MCF 10A (cell line): ENCODE measurements at regions of chr13 and their contacts with region 1.

Region 1: GRCh38 chr13:71721104-71721503 is 145.9 kb downstream of the DACH1 start:
- DNase-seq: no peak
- H3K4me3 Mint-ChIP-seq: no peak overlapping the region
- H3K27ac Mint-ChIP-seq: no peak overlapping the region
- H3K4me1 Mint-ChIP-seq: no peaks in the 10 kb centered on the region
- H3K27me3 Mint-ChIP-seq: peaks cover 46% of the 10 kb centered on the region
- CTCF ChIP-seq: no peak

Region 2: DNA sequence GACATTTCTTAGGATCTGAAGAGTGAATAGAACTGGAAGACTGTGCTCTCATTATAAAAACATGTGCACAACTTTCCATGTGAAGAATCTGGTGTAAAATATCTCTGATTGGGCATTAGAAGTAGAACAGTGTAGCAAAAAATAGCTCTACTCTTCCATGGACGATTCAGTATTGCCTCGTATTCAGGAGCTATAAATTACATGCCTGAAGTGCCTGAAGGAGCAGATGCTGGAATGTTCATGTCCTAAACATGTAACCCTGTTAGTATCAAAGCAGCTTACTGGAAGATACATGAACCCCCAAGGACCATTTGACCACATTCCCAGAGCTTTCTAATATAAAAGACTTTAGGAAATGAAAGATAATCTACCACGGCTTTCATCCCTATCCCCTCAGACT is 383.0 kb before region 1 on chr13:
- CTCF ChIA-PET with region 1: no interaction called
- POLR2A ChIA-PET with region 1: no interaction called
- intact Hi-C with region 1: no loop called
- DNase-seq: no peak
- H3K4me3 Mint-ChIP-seq: no peak overlapping the region
- H3K27ac Mint-ChIP-seq: no peak overlapping the region
- H3K4me1 Mint-ChIP-seq: no peaks in the 10 kb centered on the region
- H3K27me3 Mint-ChIP-seq: peaks cover 52% of the 10 kb centered on the region
- CTCF ChIP-seq: no peak

Region 3: GRCh38 chr13:71460211-71460610 is 260.9 kb before region 1 on chr13:
- CTCF ChIA-PET with region 1: no interaction called
- POLR2A ChIA-PET with region 1: no interaction called
- intact Hi-C with region 1: no loop called
- DNase-seq: no peak
- H3K4me3 Mint-ChIP-seq: no peak overlapping the region
- H3K27ac Mint-ChIP-seq: no peak overlapping the region
- H3K4me1 Mint-ChIP-seq: no peaks in the 10 kb centered on the region
- H3K27me3 Mint-ChIP-seq: peaks cover 68% of the 10 kb centered on the region
- CTCF ChIP-seq: no peak

Region 4: GRCh38 chr13:71768881-71769280 is 47.8 kb after region 1 on chr13:
- CTCF ChIA-PET with region 1: no interaction called
- POLR2A ChIA-PET with region 1: no interaction called
- intact Hi-C with region 1: loop called (anchors 1 kb)
- DNase-seq: no peak
- H3K4me3 Mint-ChIP-seq: no peak overlapping the region
- H3K27ac Mint-ChIP-seq: no peak overlapping the region
- H3K4me1 Mint-ChIP-seq: no peaks in the 10 kb centered on the region
- H3K27me3 Mint-ChIP-seq: peaks cover 48% of the 10 kb centered on the region
- CTCF ChIP-seq: no peak